Heart left ventricle (tissue), 16 donors: ENCODE measurements at regions of chr3 and their contacts with region 1.

Region 1: DNA sequence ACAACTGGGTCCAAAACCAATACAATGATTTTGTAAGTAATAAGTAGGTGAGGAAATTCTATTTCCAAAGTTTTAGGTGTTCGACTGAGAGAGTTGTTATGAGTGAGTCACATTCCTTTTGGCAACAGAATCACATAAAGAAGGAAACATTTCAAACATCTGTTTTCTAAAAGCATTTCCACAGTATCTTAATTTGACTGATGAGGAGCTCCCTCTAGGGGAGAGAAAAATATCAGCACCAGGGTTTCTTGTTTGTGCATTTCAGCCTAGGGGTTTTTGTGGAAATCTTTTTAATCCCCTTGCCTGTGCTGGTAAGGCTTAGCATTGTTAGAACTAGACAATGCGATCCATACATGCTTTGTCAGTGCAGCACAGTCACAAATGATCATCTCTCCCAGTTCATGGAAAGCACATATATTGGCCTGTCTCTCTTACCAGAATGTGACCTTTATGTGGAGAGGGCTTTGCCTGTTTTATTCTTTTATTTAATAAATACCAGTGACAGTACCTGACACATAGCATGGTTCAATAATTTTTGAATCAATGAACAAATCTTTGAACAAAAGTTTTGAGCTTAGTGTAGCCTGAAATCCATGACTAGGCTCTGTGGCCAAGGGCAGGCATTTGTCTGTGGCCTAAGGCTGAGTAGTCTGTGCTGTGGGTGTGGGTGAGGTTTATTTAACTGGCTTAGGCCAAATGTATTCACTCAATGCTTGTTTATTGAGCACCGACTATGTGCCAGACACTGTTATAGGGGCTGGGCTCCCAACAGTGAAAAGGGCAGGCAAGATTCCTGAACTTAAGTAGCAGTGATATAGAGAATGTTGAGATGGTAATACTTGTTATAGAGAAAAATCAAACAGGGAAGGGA is 21.1 kb upstream of the IQCF6 start:
- DNase-seq: no peak
- ATAC-seq: peak in 2 of 4 donors; percentile 38 to 57
- H3K4me3 ChIP-seq: no peak overlapping the region
- H3K27ac ChIP-seq: no peak overlapping the region
- H3K4me1 ChIP-seq: no peaks in the 10 kb centered on the region
- H3K27me3 ChIP-seq: peaks cover 0 to 34% (median 0%) of the 10 kb centered on the region in 9 donors
- CTCF ChIP-seq: peak; percentile 69 to 92 (median 81)
- POLR2A ChIP-seq: no peak

Region 2: GRCh38 chr3:51605938-51606337 is 194.2 kb before region 1 on chr3:
- intact Hi-C with region 1: no loop called
- DNase-seq: no peak
- ATAC-seq: no peak
- H3K4me3 ChIP-seq: no peak overlapping the region
- H3K27ac ChIP-seq: no peak overlapping the region
- H3K4me1 ChIP-seq: no peaks in the 10 kb centered on the region
- H3K27me3 ChIP-seq: no peaks in the 10 kb centered on the region
- CTCF ChIP-seq: no peak
- POLR2A ChIP-seq: no peak

Region 3: DNA sequence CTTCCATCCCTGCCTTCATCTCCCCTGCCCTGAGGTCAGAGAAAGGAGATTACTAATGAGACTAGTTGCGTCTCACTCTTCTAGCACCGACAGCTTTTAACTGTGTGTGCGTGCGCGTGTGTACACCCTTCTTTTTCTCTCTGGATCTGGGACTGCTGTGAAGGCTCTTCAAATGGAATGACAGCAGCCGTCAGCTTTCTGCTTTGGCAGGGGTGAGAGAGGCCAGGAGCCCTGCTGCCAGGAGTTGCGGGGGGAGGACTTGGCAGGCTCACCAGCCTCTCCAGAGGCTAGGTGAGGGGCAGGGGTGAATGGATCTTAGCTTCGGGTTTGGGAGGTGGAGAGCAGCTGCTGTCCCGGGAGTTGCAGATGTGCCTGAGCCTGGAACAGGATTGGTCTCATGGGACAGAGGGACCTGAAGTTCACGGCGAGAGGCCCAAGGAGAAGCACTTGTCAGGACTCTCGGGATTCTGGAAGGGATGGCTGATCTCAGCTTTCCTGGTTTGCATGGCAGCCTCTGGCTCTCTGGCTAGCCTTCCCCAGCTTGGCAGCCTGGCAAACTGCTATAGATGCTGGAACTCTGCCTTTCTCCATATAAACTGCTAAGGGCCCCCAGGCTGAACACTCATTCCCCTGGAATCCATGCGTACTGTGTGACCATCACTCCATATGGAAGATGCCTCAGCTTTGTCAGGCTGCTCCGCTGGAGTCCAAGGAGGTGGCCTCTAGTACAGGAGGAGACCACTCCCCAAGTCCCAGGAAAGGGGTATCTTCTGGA is 112.5 kb before region 1 on chr3:
- intact Hi-C with region 1: no loop called
- DNase-seq: peak; percentile 65 to 87 (median 75)
- ATAC-seq: peak; percentile 55 to 67 (median 60)
- H3K4me3 ChIP-seq: peak overlapping the region in 4 of 12 donors; percentile 1 to 26 (median 6)
- H3K27ac ChIP-seq: peak overlapping the region; percentile 66 to 97 (median 94)
- H3K4me1 ChIP-seq: peaks cover 22 to 86% (median 69%) of the 10 kb centered on the region in 12 donors
- H3K27me3 ChIP-seq: no peaks in the 10 kb centered on the region
- CTCF ChIP-seq: no peak
- POLR2A ChIP-seq: no peak

Region 4: DNA sequence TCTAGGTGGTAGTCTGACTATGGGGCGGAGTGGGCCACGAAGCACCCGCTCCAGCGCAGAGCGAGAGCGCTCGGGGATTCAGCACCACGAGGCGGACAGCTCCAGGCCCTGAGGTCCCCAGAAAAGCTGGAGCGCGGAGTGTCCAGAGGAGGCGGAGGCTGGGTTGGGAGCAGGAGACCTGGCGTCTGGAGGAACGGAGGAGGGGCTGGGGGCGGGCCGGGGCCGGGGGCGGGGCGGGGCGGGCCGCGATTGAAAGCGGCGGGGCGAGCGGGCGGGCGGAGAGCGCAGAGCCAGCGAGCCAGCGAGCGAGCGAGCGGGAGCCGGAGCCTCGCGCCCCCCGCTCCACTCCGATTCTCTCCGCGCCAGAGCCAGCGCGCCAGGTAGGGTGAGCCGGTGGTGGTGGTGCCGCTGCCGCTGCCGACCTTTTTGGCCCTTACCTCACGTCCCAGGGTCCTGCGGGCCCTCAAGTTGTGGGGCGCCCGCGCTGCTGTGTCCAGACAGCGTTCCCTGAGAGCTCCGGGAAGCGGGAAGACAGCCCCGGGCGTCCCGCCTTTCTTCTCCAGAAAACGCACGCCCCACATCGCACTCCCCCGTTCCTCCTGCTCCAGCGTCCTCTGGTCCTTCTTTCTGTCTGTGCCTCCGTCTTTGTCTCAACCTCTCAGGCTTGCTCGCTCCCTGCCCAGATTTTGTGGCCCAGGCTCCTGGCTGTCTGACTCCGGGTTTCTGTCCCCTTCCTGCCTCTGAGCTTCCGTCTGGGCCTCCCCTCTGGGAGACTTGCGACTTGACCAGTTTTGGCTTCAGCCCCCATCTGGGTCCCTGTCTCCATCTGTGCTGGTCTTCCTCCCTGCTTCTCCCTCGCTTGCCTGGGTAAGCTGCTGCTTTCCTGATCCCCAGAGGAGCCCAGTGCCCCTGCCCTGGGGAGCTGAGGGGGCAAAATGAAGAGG is 93.1 kb before region 1 on chr3 and contains the start of gene GRM2:
- intact Hi-C with region 1: loop called in 2 of 10 experiments (anchors 5 to 10 kb)
- DNase-seq: peak; percentile 79 to 88 (median 83)
- ATAC-seq: peak; percentile 83 to 93 (median 88)
- H3K4me3 ChIP-seq: peak within 1 kb of the TSS in 10 of 12 donors; percentile 22 to 53 (median 39)
- H3K27ac ChIP-seq: no peak within 1 kb of the TSS
- H3K4me1 ChIP-seq: peaks cover 0 to 17% (median 2%) of the 10 kb centered on the region in 12 donors
- H3K27me3 ChIP-seq: no peaks in the 10 kb centered on the region
- CTCF ChIP-seq: peak in 3 of 12 donors; percentile 14 to 35 (median 27)
- POLR2A ChIP-seq: no peak
- total RNA-seq, gene GRM2: 0.21 to 0.95 (median 0.56) TPM in 7 of 9 donors, not detected in the others

Region 5: DNA sequence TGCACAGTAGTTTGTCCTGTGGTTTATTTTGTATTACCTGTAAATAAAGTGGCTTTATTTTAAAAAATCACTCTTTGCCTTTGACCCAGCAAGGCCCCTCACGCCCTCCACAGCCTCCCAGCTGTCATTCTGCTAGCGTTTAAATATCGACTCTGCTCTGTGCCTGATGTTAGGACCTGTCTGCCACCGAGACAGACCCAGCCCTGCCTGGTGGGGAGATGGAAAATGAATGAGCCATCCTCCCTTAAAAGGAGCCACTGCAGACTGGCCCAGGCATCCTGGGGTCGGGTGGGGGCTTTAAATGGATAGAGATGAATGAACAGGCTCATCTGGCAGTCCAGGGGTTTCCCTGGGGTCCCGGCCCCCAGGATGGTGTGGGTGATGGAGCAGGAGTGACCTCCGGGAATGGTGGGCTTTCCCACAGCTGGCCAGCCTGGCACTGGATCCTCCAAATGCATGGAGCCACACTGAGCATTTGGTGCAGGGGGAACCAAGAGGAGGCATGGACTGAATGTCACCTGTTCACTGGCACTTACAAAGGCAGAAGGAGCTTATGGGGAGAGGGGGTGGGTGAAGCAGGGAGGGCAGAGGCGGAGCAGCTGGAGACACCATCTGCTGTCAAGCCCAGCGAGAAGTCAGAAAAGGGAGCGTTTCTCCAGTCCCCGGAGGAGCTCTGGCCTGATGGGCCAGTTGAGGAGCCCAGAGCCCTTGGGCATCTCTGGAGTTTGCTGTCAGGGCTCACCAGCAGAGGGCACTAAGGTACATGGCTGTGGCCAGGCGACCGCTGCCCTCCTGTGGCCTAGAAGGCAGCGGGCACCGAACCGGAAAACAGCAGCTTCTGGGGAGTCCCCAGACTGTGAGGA is 81.3 kb before region 1 on chr3:
- intact Hi-C with region 1: loop called in 8 of 10 experiments (anchors 2 to 10 kb)
- DNase-seq: peak in 4 of 5 donors; percentile 33 to 73 (median 59)
- ATAC-seq: peak; percentile 38 to 84 (median 78)
- H3K4me3 ChIP-seq: no peak overlapping the region
- H3K27ac ChIP-seq: no peak overlapping the region
- H3K4me1 ChIP-seq: peaks cover 0 to 4% (median 0%) of the 10 kb centered on the region in 12 donors
- H3K27me3 ChIP-seq: no peaks in the 10 kb centered on the region
- CTCF ChIP-seq: peak; percentile 60 to 81 (median 68)
- POLR2A ChIP-seq: no peak